ENCODE measurements at regions of chr10 and their contacts with region 1.

Region 1: GRCh38 chr10:5948999-5949759 is 28.2 kb downstream of the IL15RA start:
- DNase-seq: peak; percentile 60 to 83 (median 72)
- ATAC-seq: peak; percentile 95
- H3K4me3 ChIP-seq: no peak overlapping the region
- H3K27ac ChIP-seq: no peak overlapping the region
- H3K4me1 ChIP-seq: peaks cover 9 to 20% of the 10 kb centered on the region in 2 experiments; a peak in 4 of 5 replicates
- H3K27me3 ChIP-seq: no peaks in the 10 kb centered on the region
- CTCF ChIP-seq: peak; percentile 85 to 92 (median 90)
- EP300 ChIP-seq: no peak
- POLR2A ChIP-seq: no peak
- RAD21 ChIP-seq: peak; percentile 82 to 93

Region 2: DNA sequence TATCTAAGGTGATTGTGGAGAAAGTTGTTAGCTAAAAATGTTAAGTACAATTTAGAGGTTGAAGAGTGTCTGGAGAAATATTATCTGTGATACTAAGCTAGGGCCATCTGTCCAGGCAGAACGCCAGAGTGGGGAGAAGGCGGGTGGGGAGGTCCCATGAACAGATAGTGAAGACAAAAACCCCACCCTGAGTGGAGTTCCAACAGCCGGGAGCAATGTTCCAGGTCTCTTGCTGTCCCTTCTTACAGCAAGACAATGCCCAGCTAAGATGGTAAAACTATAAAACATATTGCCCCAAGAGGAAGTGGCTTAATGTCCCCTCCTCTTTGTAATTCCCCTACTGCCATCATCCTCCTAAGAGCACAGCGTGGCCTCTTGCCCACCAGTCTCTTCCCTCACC is 38.6 kb after region 1 on chr10:
- CTCF ChIA-PET with region 1: no interaction called
- POLR2A ChIA-PET with region 1: no interaction called
- in situ Hi-C with region 1: no loop called
- intact Hi-C with region 1: no loop called
- DNase-seq: peak; percentile 49 to 84 (median 66)
- ATAC-seq: peak; percentile 92
- H3K4me3 ChIP-seq: no peak overlapping the region
- H3K27ac ChIP-seq: peak overlapping the region; percentile 73
- H3K4me1 ChIP-seq: peaks cover 5 to 19% of the 10 kb centered on the region in 2 experiments; a peak in 4 of 5 replicates
- H3K27me3 ChIP-seq: no peaks in the 10 kb centered on the region
- CTCF ChIP-seq: no peak
- EP300 ChIP-seq: peak; percentile 40; the same call in 1 of the 2 replicates
- POLR2A ChIP-seq: no peak
- RAD21 ChIP-seq: no peak

Region 3: DNA sequence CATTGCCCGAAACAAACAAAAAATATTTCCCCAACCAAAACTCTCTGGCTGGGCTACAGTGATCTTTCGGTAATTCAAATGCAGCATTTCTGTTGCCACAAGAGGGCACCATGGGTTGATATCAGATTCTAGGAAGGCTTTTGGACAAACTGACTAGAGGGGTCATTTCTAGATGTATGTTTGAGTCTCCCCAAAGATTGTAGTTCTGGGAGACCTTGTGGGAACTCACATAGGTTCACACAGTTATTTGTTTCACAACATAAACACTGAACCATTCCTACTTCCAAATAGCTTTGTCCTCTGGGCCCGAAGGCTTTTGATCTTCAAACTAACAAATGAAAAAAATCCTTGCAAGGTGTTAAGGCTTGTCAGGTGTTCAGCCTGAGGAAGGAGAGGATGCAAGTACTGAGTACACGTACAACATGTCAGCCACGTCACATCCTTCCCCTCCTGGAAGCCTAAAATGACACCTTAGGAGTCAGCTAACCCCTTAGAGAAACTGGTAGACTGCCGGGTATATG is 65.1 kb after region 1 on chr10:
- CTCF ChIA-PET with region 1: no interaction called
- POLR2A ChIA-PET with region 1: no interaction called
- in situ Hi-C with region 1: no loop called
- intact Hi-C with region 1: loop called (anchors 5 kb)
- DNase-seq: peak; percentile 25 to 68 (median 43)
- ATAC-seq: peak; percentile 91
- H3K4me3 ChIP-seq: no peak overlapping the region
- H3K27ac ChIP-seq: no peak overlapping the region
- H3K4me1 ChIP-seq: peaks cover 0 to 5% of the 10 kb centered on the region in 2 experiments; a peak in 3 of 5 replicates
- H3K27me3 ChIP-seq: peaks cover 4 to 10% of the 10 kb centered on the region in 2 experiments; a peak in 2 of 5 replicates
- CTCF ChIP-seq: peak; percentile 74 to 79 (median 78)
- EP300 ChIP-seq: no peak
- POLR2A ChIP-seq: no peak
- RAD21 ChIP-seq: peak; percentile 63 to 80

Region 4: DNA sequence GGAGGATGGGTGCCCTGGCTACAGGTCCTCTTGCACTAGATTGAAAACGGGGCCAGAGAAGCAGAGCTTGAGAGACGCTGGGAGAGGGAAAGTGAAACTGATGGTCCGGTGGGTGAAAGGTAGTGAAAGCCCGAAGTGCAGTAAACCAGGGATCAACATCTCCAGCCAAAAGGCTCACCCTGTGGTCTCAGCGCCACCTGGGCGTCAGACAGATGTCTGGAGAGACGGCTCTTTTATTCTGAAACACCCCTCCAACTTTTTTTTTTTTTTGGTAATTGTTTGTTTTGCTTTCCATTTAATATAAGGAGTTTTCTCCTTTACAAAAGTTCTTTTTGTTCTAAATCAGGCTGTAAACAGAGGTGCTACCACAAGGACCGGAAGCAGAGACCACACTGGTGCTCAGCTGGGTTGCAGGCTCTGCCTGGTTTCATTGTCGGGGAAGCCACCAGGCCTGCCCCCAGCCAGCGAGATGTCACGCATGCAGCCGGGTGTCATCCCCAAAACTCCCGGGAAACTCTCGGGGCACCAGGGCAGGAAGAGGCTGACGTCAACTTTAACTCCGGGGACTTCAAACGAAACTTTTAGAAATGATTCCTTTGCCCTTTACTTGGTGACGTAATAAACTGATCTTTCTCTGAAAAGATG is 101.7 kb after region 1 on chr10:
- CTCF ChIA-PET with region 1: interaction called, 13 read pairs
- POLR2A ChIA-PET with region 1: no interaction called
- in situ Hi-C with region 1: no loop called
- intact Hi-C with region 1: loop called (anchors 1 kb)
- DNase-seq: peak; percentile 23 to 61 (median 50)
- ATAC-seq: peak; percentile 85
- H3K4me3 ChIP-seq: no peak overlapping the region
- H3K27ac ChIP-seq: no peak overlapping the region
- H3K4me1 ChIP-seq: peaks cover 10 to 14% of the 10 kb centered on the region in 2 experiments
- H3K27me3 ChIP-seq: peaks cover 7 to 22% of the 10 kb centered on the region in 2 experiments; a peak in 4 of 5 replicates
- CTCF ChIP-seq: peak; percentile 59 to 82 (median 65); a peak in 5 of 6 replicates
- EP300 ChIP-seq: no peak
- POLR2A ChIP-seq: no peak
- RAD21 ChIP-seq: peak; percentile 52 to 80

Region 5: GRCh38 chr10:6062101-6062771 is 113.1 kb after region 1 on chr10 and contains the start of gene IL2RA:
- CTCF ChIA-PET with region 1: no interaction called
- POLR2A ChIA-PET with region 1: no interaction called
- in situ Hi-C with region 1: no loop called
- intact Hi-C with region 1: no loop called
- DNase-seq: no peak
- ATAC-seq: no peak; the same call in 2 of the 3 replicates
- H3K4me3 ChIP-seq: no peak within 1 kb of the TSS
- H3K27ac ChIP-seq: no peak within 1 kb of the TSS
- H3K4me1 ChIP-seq: peaks cover 0 to 3% of the 10 kb centered on the region in 2 experiments; a peak in 1 of 5 replicates
- H3K27me3 ChIP-seq: peaks cover 9 to 15% of the 10 kb centered on the region in 2 experiments
- CTCF ChIP-seq: no peak
- EP300 ChIP-seq: no peak
- POLR2A ChIP-seq: no peak
- RAD21 ChIP-seq: no peak
- polyA plus RNA-seq, gene IL2RA: not detected

Region 6: GRCh38 chr10:6088721-6089390 is 139.7 kb after region 1 on chr10 and contains the start of gene RBM17:
- CTCF ChIA-PET with region 1: interaction called, 47 read pairs
- POLR2A ChIA-PET with region 1: no interaction called
- in situ Hi-C with region 1: loop called (anchors 5 kb)
- intact Hi-C with region 1: loop called (anchors 2 kb)
- DNase-seq: peak; percentile 93 to 97 (median 95)
- ATAC-seq: peak; percentile 93
- H3K4me3 ChIP-seq: peak within 1 kb of the TSS; percentile 98
- H3K27ac ChIP-seq: peak within 1 kb of the TSS; percentile 89
- H3K4me1 ChIP-seq: peaks cover 14 to 17% of the 10 kb centered on the region in 2 experiments; a peak in 4 of 5 replicates
- H3K27me3 ChIP-seq: peaks cover 4% of the 10 kb centered on the region in 2 experiments; a peak in 4 of 5 replicates
- CTCF ChIP-seq: peak; percentile 100
- EP300 ChIP-seq: no peak; the same call in 1 of the 2 replicates
- POLR2A ChIP-seq: no peak
- RAD21 ChIP-seq: peak; percentile 92 to 93
- polyA plus RNA-seq, gene RBM17: 23.6 to 25.8 TPM

Region 7: DNA sequence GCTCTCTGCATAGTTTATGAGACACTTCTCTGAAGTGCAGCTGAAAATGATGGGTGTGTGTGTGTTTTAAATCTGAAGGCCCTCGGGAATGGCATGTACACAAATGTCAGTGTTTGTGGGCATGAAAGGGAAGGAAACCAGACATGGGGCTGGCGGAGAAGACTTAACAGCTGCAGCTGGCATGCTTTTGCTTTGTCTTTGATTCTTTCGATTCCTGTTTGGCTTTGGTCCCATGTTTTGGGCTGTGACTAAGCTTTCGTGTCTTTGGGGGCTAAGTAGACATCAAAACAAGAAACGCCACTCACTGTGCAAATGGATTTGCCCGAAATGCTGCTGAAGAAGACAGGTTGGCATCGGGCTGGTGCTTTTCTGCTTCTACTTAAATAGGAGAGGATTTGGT is 432.9 kb after region 1 on chr10:
- CTCF ChIA-PET with region 1: no interaction called
- POLR2A ChIA-PET with region 1: no interaction called
- in situ Hi-C with region 1: loop called (anchors 25 kb)
- intact Hi-C with region 1: no loop called
- DNase-seq: no peak
- ATAC-seq: no peak
- H3K4me3 ChIP-seq: no peak overlapping the region
- H3K27ac ChIP-seq: no peak overlapping the region
- H3K4me1 ChIP-seq: no peaks in the 10 kb centered on the region
- H3K27me3 ChIP-seq: peaks cover 10 to 32% of the 10 kb centered on the region in 2 experiments; a peak in 4 of 5 replicates
- CTCF ChIP-seq: no peak
- EP300 ChIP-seq: no peak
- POLR2A ChIP-seq: no peak
- RAD21 ChIP-seq: no peak